ENCODE measurements at regions of chr10 and their contacts with region 1.

Region 1: GRCh38 chr10:6920072-6921019 is 340.3 kb upstream of the PRKCQ start:
- DNase-seq: peak; percentile 40 to 81 (median 78)
- ATAC-seq: peak; percentile 86 to 91
- H3K4me3 ChIP-seq: no peak overlapping the region
- H3K27ac ChIP-seq: no peak overlapping the region
- H3K4me1 ChIP-seq: no peaks in the 10 kb centered on the region
- H3K27me3 ChIP-seq: no peaks in the 10 kb centered on the region

Region 2: DNA sequence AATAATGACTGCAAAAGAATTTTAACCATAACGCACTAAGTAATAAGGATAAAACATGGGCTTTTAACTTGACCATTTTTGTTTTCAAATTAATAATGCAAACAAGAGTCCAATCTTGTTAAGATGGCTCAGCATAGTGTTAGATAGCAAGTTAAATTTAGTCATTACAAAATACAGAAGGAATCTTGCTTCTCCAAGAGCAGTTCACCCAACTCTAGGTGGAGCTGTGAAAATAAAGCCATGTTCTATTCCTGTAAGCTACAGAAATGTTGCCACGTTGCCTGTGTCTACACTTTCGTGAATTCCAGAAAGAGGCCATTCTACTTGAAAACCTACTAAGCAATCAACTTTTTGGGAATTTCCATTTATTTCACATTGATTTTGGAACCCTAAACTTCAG is 298.6 kb after region 1 on chr10:
- intact Hi-C with region 1: no loop called
- DNase-seq: no peak
- ATAC-seq: peak; percentile 86 to 88
- H3K4me3 ChIP-seq: no peak overlapping the region
- H3K27ac ChIP-seq: no peak overlapping the region
- H3K4me1 ChIP-seq: peaks cover 3% of the 10 kb centered on the region
- H3K27me3 ChIP-seq: no peaks in the 10 kb centered on the region

Region 3: DNA sequence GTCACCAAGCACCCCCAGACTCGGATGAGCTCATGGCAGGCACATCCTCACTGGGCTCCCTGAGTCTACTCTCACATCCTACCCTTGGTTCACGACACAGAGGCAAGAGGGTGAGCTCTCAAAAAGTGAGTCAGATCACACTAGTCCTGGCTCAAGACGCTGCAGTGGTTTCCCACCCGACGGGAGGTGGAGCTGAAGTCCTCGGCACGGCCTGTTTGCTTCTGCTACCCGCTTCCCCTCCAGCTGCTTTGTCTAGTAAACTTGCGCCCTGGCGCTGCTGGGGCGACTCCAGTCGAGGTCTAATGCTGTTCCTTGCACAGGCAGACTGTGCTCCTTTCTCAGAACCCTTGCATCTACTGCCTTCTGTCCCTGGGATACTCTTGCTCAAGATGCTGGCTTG is 504.0 kb after region 1 on chr10:
- intact Hi-C with region 1: loop called in 3 of 4 experiments (anchors 5 to 10 kb)
- DNase-seq: peak in 1 of 3 donors; percentile 56
- ATAC-seq: no peak
- H3K4me3 ChIP-seq: no peak overlapping the region
- H3K27ac ChIP-seq: no peak overlapping the region
- H3K4me1 ChIP-seq: no peaks in the 10 kb centered on the region
- H3K27me3 ChIP-seq: peaks cover 2% of the 10 kb centered on the region

Region 4: GRCh38 chr10:7901256-7901655 is 980.9 kb after region 1 on chr10:
- intact Hi-C with region 1: no loop called
- DNase-seq: no peak
- ATAC-seq: no peak
- H3K4me3 ChIP-seq: no peak overlapping the region
- H3K27ac ChIP-seq: no peak overlapping the region
- H3K4me1 ChIP-seq: no peaks in the 10 kb centered on the region
- H3K27me3 ChIP-seq: no peaks in the 10 kb centered on the region